ENCODE measurements at regions of chr16 and their contacts with region 1.

Region 1: GRCh38 chr16:78235168-78235800 is 135.8 kb downstream of the WWOX start:
- DNase-seq: peak; percentile 84
- ATAC-seq: peak; percentile 97
- H3K4me3 ChIP-seq: no peak overlapping the region
- H3K27ac ChIP-seq: no peak overlapping the region
- H3K4me1 ChIP-seq: no peaks in the 10 kb centered on the region
- H3K27me3 ChIP-seq: no peaks in the 10 kb centered on the region
- CTCF ChIP-seq: peak; percentile 95

Region 2: GRCh38 chr16:78122774-78123315 is 112.4 kb before region 1 on chr16:
- intact Hi-C with region 1: loop called (anchors 10 kb)
- DNase-seq: no peak
- ATAC-seq: peak; percentile 84
- H3K4me3 ChIP-seq: no peak overlapping the region
- H3K27ac ChIP-seq: peak overlapping the region; percentile 34
- H3K4me1 ChIP-seq: peaks cover 8% of the 10 kb centered on the region
- H3K27me3 ChIP-seq: no peaks in the 10 kb centered on the region
- CTCF ChIP-seq: peak; percentile 61

Region 3: GRCh38 chr16:78543023-78543422 is 307.7 kb after region 1 on chr16:
- intact Hi-C with region 1: no loop called
- DNase-seq: no peak
- ATAC-seq: no peak
- H3K4me3 ChIP-seq: no peak overlapping the region
- H3K27ac ChIP-seq: no peak overlapping the region
- H3K4me1 ChIP-seq: no peaks in the 10 kb centered on the region
- H3K27me3 ChIP-seq: no peaks in the 10 kb centered on the region
- CTCF ChIP-seq: no peak

Measured in upper lobe of right lung (tissue), 1 donor.